ENCODE measurements at regions of chr1 and their contacts with region 1.

Region 1: DNA sequence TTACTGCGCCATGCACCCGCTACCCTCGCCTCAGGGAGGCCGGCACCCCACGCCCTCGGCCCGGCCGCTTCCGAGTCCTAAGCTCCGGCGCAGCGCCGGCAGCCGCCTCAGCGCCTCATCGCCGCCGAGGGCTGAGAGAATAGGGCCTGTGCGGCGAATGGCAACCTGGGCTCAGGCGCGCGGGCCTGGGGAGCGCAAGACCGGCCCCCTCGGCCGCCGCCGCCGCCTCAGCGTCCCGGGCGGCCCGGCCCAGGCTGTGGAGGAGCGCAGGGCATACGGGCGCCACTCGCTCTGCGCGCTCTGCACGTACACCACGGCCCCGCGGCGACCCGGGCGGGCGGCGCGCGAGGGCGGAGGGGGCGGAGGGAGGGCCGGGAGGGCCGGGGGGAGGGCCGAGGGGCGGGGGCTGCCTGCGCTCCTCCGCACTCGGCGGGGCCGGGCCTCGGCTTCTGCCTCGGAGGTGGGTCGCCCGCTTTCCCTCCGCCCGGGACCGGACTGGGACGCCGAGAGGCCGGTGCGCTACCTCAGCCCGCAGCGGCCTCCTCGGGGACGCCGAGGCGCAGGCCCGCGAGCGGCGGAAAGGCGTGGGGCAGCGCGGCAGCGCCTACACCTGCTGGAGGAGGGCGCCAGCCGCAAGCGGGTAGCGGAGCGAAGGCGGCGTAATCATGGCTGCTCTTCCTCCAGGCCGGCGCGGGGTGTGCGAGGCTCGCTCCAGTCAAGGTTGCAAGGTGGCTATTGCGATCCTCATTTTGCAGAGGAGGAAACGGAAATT is at the start of gene EGLN1:
- DNase-seq: peak; percentile 86
- H3K4me3 ChIP-seq: peak within 1 kb of the TSS; percentile 76
- H3K27ac ChIP-seq: peak within 1 kb of the TSS; percentile 98
- H3K4me1 ChIP-seq: peaks cover 11% of the 10 kb centered on the region
- H3K27me3 ChIP-seq: no peaks in the 10 kb centered on the region
- CTCF ChIP-seq: no peak
- total RNA-seq, gene EGLN1: 36.6 to 79.1 TPM

Region 2: DNA sequence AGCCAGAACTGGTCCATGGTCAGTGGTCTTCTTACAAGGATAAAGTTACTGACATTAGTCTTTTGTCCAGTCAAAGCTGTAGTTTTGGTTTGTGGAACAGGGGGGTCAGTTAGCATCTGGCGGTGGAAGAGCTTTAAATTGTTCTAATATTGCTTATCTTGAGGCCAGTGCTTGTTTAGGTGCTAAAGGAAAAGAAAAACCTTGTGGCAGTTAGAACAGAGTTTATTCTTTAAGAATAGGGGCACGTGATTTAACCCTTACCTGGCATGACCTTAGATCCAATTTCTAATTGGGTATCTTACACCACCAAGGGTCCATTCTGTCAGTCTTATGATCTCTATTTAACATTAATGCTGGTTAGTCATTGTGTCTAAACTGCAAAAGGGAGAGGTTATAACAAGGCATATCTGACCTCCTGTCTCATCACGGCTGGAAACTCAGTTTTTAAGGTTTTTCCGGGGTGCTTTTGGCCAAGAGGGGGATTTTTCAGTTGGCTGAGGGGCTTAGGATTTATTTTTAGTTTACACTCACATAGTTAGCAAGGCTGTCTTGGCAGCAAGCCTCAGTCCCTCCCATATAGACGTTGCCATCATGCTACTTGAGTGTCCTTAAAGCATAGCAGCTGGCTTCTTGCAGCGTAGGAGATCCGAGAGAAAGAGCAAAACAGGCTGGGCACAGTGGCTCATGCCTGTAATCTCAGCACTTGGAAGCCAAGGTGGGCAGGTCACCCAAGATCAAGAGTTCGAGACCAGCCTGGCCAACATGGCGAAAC is 322.0 kb before region 1 on chr1:
- intact Hi-C with region 1: no loop called
- DNase-seq: no peak
- H3K4me3 ChIP-seq: no peak overlapping the region
- H3K27ac ChIP-seq: no peak overlapping the region
- H3K4me1 ChIP-seq: no peaks in the 10 kb centered on the region
- H3K27me3 ChIP-seq: no peaks in the 10 kb centered on the region
- CTCF ChIP-seq: no peak

Region 3: DNA sequence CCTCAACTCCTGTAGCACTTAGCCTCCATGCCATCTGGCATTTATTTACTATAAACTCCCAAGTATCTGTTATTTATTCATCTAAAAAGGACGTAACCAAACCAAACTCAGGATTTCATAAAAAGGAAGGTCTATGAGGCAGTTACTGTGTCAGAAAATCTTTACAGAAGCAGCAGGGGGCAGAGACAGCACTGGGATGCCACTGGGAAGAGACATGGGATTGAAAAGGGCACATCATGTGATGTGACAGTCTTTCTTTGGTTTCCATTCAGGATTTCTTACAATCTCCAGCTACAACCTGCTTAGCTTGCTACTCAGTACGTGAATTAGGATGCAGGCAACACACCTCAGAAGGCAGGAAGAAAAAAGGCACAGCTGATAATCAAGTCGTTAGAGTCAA is 52.9 kb before region 1 on chr1:
- intact Hi-C with region 1: loop called (anchors 10 kb)
- DNase-seq: no peak
- H3K4me3 ChIP-seq: no peak overlapping the region
- H3K27ac ChIP-seq: no peak overlapping the region
- H3K4me1 ChIP-seq: no peaks in the 10 kb centered on the region
- H3K27me3 ChIP-seq: no peaks in the 10 kb centered on the region
- CTCF ChIP-seq: no peak

Region 4: DNA sequence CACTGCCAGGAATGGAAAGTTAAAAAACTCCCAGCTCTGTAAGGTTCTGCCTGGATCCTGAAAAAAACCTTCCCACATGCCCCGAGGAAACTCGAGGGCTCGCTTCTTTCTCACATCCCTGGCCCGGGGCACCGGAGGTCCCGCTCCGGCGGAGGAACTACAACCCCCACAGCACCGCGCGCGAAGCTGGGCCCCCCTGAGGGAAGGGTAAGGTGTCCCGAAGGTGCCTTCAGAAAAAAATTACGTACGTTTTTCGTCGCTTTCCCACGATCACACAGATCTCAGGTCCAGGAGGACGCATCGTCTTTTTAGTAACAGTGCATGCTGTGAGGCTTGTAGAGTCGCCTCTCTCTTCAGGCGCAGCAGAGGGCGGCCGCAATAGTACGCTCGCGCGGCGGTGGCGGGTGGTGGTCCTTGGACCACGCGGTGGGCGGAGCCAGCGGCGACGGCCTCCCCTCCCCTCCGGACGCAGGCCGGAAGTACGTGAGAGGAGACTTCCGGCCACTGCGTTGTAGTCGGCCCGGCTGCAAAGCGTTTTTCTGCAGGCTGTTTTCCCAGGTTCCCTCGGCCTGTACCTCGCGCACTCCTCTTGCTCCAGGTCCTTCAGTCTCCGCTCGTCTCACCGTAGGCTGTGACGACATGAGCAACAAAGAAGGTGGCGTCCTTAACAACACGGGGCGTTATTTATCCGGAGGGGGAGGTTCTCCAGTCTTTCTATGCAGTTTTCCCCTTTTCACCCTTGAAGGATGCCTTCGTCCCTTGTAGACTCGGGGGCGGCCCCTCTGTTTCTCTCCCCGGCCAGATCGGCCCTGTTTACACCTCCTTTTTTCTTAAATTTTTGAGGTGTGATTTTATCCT is 106.2 kb after region 1 on chr1 and contains the start of gene TSNAX:
- intact Hi-C with region 1: loop called (anchors 5 kb)
- DNase-seq: peak; percentile 90
- H3K4me3 ChIP-seq: peak within 1 kb of the TSS; percentile 77
- H3K27ac ChIP-seq: peak within 1 kb of the TSS; percentile 92
- H3K4me1 ChIP-seq: peaks cover 10% of the 10 kb centered on the region
- H3K27me3 ChIP-seq: no peaks in the 10 kb centered on the region
- CTCF ChIP-seq: no peak
- total RNA-seq, gene TSNAX: 22.6 to 37.3 TPM